Heart left ventricle (tissue), 16 donors: ENCODE measurements at regions of chr4 and their contacts with region 1.

Region 1: DNA sequence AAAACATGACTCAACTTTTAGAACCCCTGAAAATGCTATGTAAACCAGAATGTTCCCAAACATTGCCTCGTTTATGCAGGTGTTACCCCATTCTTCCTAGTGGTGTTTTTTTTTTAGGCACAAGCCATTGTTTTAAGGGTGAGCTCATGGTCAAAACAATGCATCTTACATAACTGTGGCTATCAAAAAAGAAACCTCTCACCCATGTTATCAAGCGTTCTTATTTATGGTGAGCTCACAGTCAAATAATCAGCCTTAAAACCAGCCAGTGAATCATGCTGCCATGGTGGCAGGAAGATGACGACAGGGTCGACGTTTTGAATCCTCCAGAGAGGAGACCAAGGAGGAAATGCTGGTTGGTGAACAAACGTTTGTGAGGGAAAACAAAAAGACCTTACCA is 195.2 kb downstream of the KDR start:
- DNase-seq: peak in 2 of 5 donors; percentile 23 to 36
- ATAC-seq: peak; percentile 57 to 89 (median 64)
- H3K4me3 ChIP-seq: peak overlapping the region in 1 of 12 donors; percentile 11
- H3K27ac ChIP-seq: peak overlapping the region in 11 of 12 donors; percentile 17 to 79 (median 57)
- H3K4me1 ChIP-seq: peaks cover 7 to 24% (median 13%) of the 10 kb centered on the region in 12 donors
- H3K27me3 ChIP-seq: no peaks in the 10 kb centered on the region
- CTCF ChIP-seq: no peak
- POLR2A ChIP-seq: no peak

Region 2: GRCh38 chr4:54658252-54659093 is 271.8 kb before region 1 on chr4:
- intact Hi-C with region 1: no loop called
- DNase-seq: peak; percentile 46 to 75 (median 53)
- ATAC-seq: peak; percentile 34 to 84 (median 82)
- H3K4me3 ChIP-seq: peak overlapping the region; percentile 27 to 75 (median 62)
- H3K27ac ChIP-seq: peak overlapping the region in 8 of 12 donors; percentile 22 to 60 (median 34)
- H3K4me1 ChIP-seq: peaks cover 0 to 33% (median 28%) of the 10 kb centered on the region in 12 donors
- H3K27me3 ChIP-seq: peaks cover 0 to 38% (median 0%) of the 10 kb centered on the region in 9 donors
- CTCF ChIP-seq: peak in 10 of 12 donors; percentile 17 to 60 (median 32)
- POLR2A ChIP-seq: no peak

Region 3: GRCh38 chr4:54840992-54841768 is 89.0 kb before region 1 on chr4:
- intact Hi-C with region 1: loop called in 1 of 10 experiments (anchors 10 kb)
- DNase-seq: peak in 3 of 5 donors; percentile 21 to 37 (median 21)
- ATAC-seq: peak in 3 of 4 donors; percentile 69 to 86 (median 80)
- H3K4me3 ChIP-seq: no peak overlapping the region
- H3K27ac ChIP-seq: no peak overlapping the region
- H3K4me1 ChIP-seq: peaks cover 0 to 16% (median 0%) of the 10 kb centered on the region in 12 donors
- H3K27me3 ChIP-seq: no peaks in the 10 kb centered on the region
- CTCF ChIP-seq: peak in 11 of 12 donors; percentile 22 to 51 (median 36)
- POLR2A ChIP-seq: no peak

Region 4: DNA sequence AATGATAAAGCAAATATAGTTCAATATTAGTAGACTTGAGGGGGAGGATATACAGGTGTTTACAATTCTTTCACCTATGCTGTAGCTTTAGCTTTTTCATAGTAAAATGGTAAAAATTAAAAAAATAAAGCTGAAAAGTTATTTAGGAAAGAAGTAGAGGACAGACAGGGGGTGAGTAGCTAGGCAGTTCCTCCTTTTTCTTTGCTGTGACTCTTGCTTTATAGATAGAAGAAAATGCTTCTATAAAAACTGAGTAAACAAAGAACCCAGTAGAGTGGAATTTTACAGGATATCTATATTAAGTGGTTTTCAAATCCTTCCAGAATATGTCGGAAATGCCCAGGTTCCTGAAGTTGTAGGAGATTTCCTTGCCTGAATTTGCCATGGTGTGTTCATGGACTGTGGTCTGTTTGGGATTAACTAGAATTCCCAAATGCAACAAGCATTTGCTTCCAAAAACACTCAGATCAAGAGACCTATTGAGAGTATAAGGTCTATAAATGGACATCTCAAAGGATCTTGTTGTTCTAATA is 120.3 kb after region 1 on chr4:
- intact Hi-C with region 1: no loop called
- DNase-seq: no peak
- ATAC-seq: no peak
- H3K4me3 ChIP-seq: no peak overlapping the region
- H3K27ac ChIP-seq: peak overlapping the region in 8 of 12 donors; percentile 25 to 69 (median 39)
- H3K4me1 ChIP-seq: peaks cover 0 to 21% (median 4%) of the 10 kb centered on the region in 12 donors
- H3K27me3 ChIP-seq: no peaks in the 10 kb centered on the region
- CTCF ChIP-seq: no peak
- POLR2A ChIP-seq: no peak